Activated CD4-positive, alpha-beta T cell treated with anti-CD3 and anti-CD28 coated beads, Interleukin-2, amount 10 ng/mL, durations not matched to agents 24 days and 14 days (primary cell): ENCODE measurements at regions of chr10 and their contacts with region 1.

Region 1: DNA sequence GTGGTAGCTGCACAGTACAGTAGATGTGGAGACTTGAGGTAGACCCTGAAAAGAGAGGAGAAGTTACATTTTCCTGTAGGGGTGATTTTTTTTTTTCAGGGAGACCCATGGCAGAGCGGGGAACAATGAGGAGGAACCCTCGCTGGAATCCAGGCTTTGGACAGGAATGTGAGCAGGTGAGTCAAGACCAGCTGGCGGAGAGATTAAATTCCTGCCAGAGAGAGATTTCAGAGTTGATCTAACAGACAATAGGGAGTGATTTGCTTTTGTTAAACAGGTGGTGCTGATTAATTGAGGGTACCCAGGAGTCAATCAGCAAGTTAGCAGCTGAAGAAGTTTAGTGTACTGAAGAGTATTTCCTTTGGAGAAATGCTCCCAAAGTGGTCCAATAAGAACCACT is 41.6 kb upstream of the MINDY3 start:
- DNase-seq: no peak
- H3K4me3 Mint-ChIP-seq: no peak overlapping the region
- H3K27ac Mint-ChIP-seq: no peak overlapping the region
- H3K4me1 Mint-ChIP-seq: no peaks in the 10 kb centered on the region
- H3K27me3 Mint-ChIP-seq: peaks cover 14% of the 10 kb centered on the region

Region 2: DNA sequence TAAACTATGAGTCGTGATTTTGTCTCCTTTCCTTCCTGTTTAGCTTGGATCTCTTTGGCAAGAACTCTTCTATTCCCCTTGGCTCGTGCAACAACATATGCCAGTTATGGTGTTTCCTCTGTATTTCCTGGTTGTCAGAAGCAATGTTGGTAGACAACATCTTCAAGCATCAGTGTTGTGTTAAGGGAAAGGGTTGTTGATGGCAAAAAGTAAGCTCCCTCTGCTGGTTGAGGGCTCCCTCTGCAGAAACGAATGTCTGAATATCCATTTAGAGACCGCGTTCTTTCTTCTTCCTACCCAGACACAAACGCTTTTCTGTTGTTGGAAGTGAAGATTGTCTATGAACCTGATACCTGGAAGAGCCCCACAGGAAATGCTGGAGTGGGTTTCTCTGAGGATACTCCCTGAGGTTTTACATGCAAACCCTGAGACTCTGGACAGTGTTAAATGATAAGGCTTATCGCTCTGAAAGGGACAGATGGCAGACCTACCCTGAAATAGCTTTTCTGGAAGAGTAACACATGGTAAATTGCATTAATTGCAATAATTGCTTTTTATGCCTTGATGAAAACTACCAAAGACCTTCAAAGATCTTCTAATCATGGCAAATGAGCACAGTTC is 643.3 kb after region 1 on chr10:
- intact Hi-C with region 1: loop called (anchors 10 kb)
- DNase-seq: peak; percentile 66
- H3K4me3 Mint-ChIP-seq: no peak overlapping the region
- H3K27ac Mint-ChIP-seq: no peak overlapping the region
- H3K4me1 Mint-ChIP-seq: no peaks in the 10 kb centered on the region
- H3K27me3 Mint-ChIP-seq: no peaks in the 10 kb centered on the region

Region 3: GRCh38 chr10:16809074-16809718 is 907.3 kb after region 1 on chr10:
- intact Hi-C with region 1: loop called (anchors 1 kb)
- DNase-seq: peak; percentile 83
- H3K4me3 Mint-ChIP-seq: no peak overlapping the region
- H3K27ac Mint-ChIP-seq: no peak overlapping the region
- H3K4me1 Mint-ChIP-seq: peaks cover 10% of the 10 kb centered on the region
- H3K27me3 Mint-ChIP-seq: no peaks in the 10 kb centered on the region

Region 4: GRCh38 chr10:16856567-16856966 is 954.7 kb after region 1 on chr10:
- intact Hi-C with region 1: no loop called
- DNase-seq: no peak
- H3K4me3 Mint-ChIP-seq: no peak overlapping the region
- H3K27ac Mint-ChIP-seq: no peak overlapping the region
- H3K4me1 Mint-ChIP-seq: no peaks in the 10 kb centered on the region
- H3K27me3 Mint-ChIP-seq: peaks cover 14% of the 10 kb centered on the region